ENCODE measurements at regions of chr1 and their contacts with region 1.

Region 1: DNA sequence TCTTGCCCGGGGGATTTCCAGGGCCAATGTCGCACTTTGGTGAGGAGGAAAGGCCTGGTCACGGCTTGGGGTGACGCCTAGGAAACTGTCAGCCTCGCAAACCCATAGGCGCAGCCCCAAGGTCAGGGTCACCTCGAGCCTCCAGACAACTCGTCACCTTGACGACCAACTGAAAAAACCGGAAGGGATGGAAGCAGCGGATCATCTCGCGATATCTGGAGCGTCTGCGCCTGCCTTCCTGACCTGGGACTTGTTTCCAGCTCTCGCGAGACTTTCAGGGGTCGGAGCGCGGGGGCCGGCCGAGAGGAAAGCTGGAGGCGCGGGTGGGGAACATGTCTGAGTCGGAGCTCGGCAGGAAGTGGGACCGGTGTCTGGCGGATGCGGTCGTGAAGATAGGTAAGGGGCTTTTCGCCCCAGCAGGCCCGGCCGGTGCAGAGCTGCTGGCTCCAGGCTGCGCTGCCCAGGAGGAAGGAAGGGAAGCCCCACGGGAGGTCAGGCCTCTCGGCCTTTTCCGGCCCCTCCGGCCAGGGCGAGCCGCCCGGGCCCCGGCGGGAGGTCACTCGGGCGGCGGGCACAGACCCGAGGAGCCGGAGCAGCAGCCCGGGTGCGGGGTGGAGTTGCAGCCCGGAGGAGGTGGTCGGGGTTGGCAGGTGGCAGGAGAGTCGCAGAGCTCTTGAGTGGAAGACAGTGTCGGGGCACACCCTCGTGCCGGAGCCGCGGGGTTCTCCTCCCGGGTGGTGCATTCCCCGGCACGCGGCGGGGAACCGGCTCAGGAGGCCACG is 47.2 kb upstream of the NBL1 start:
- DNase-seq: peak; percentile 97 to 99 (median 98)
- H3K4me3 ChIP-seq: peak overlapping the region; percentile 94
- H3K4me3 Mint-ChIP-seq: peak overlapping the region; percentile 87 to 98 (median 97)
- H3K27ac ChIP-seq: peak overlapping the region; percentile 100
- H3K27ac Mint-ChIP-seq: peak overlapping the region; percentile 97 to 100 (median 100)
- H3K4me1 ChIP-seq: peaks cover 53% of the 10 kb centered on the region
- H3K4me1 Mint-ChIP-seq: peaks cover 42 to 59% (median 52%) of the 10 kb centered on the region in 3 donors
- H3K27me3 ChIP-seq: no peaks in the 10 kb centered on the region
- H3K27me3 Mint-ChIP-seq: peaks cover 0 to 5% of the 10 kb centered on the region in 2 donors

Region 2: GRCh38 chr1:19606817-19607642 is 10.1 kb after region 1 on chr1:
- CTCF ChIA-PET with region 1: interaction called, 7 read pairs
- POLR2A ChIA-PET with region 1: interaction called, 16 read pairs
- DNase-seq: peak; percentile 45 to 82 (median 62)
- H3K4me3 ChIP-seq: no peak overlapping the region
- H3K4me3 Mint-ChIP-seq: peak overlapping the region; percentile 58 to 83 (median 69)
- H3K27ac ChIP-seq: no peak overlapping the region
- H3K27ac Mint-ChIP-seq: peak overlapping the region; percentile 75 to 97 (median 84)
- H3K4me1 ChIP-seq: peaks cover 52% of the 10 kb centered on the region
- H3K4me1 Mint-ChIP-seq: peaks cover 54 to 75% (median 74%) of the 10 kb centered on the region in 3 donors
- H3K27me3 ChIP-seq: no peaks in the 10 kb centered on the region
- H3K27me3 Mint-ChIP-seq: peaks cover 0 to 2% of the 10 kb centered on the region in 2 donors

Region 3: DNA sequence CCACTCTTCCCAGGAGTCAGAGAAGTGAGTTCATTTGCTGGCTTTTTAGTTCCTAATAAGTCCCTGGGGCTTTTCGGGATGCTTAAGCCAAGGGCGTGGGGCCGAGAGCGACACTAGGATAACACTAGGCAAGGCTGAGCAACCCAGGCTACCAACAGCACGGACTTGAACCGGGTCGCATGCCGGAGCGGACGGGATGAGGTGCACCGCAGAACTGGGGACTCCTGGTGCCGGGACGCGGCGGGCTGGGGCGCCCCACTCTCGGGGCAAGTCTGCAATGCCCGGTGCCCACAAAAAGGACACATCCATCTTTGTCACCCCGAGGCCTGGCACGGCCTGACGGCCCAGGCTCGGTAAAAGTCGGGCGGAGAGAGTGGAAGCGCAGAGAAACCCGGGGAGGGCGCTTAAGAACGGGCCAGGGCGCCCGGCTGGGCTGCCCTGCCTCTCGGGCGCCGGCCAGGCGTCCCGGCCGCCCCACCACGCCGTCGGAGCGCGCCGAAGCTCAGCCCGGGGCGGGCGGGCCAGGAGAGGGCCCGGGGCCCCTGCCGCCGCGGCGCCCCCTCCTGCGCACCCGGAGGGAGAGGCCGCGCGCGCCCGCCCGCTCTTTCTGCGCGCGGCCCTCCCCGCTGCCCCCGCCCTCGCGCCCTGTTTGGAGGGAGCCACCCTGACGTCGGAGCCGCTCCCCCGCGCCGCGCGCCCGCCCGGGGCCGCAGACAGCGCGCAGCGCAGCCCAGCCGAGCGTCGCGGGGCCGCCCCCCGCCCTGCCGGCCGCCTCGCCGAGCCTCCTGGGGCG is 46.9 kb after region 1 on chr1 and contains the start of gene NBL1:
- CTCF ChIA-PET with region 1: interaction called, 3 read pairs
- POLR2A ChIA-PET with region 1: interaction called, 22 read pairs
- DNase-seq: peak; percentile 61 to 83 (median 69)
- H3K4me3 ChIP-seq: peak within 1 kb of the TSS; percentile 61
- H3K4me3 Mint-ChIP-seq: peak within 1 kb of the TSS; percentile 89 to 98 (median 97)
- H3K27ac ChIP-seq: peak within 1 kb of the TSS; percentile 25
- H3K27ac Mint-ChIP-seq: peak within 1 kb of the TSS in 7 of 8 donors; percentile 88 to 98 (median 94)
- H3K4me1 ChIP-seq: peaks cover 27% of the 10 kb centered on the region
- H3K4me1 Mint-ChIP-seq: peaks cover 17 to 42% (median 22%) of the 10 kb centered on the region in 3 donors
- H3K27me3 ChIP-seq: peaks cover 6% of the 10 kb centered on the region
- H3K27me3 Mint-ChIP-seq: peaks cover 19 to 27% of the 10 kb centered on the region in 2 donors
- total RNA-seq, gene NBL1: 35.6 to 36.3 TPM

Measured in CD8-positive, alpha-beta memory T cell (primary cell).